ENCODE measurements at regions of chr6 and their contacts with region 1.

Region 1: DNA sequence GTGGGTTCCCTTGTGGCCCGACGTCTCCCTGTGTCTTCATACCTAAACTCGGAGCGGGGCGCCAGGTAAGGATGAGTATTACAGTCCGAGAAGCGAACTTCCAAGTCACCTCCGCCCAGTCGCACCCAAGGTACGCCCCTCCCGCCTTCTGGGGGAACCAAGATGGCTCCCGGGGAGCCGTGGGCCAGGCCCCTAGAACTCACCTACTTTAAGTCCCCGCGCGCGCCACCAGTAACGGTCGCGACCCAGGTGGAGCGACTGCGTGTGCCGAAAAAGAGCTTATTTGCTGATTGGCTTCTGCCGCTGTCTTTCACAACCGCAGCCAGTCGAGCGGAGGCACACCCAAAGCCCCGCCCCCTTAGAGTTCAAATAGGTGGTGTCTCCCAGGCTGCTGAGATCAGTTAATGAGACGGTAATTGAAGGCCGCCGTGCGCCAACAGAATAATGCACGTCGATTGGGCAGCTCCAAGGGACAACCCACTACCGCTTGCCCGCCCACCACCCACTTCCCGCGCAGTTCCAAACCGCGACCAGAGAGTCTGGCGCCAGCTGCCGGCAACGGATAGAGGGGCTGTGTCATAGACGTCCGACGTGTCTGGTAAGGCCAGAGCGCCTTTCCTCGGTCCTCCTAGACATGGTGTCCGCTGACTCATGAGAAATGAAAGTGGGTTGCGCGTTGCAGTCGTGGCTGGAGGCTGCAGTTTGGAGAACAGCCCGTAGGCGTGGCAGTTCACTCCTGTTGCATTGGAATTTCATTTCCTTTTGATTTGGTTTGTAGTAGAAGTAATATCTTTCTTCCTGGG is at the start of gene MDC1:
- DNase-seq: peak; percentile 100
- H3K4me3 Mint-ChIP-seq: peak within 1 kb of the TSS; percentile 92
- H3K27ac Mint-ChIP-seq: peak within 1 kb of the TSS; percentile 99
- H3K4me1 Mint-ChIP-seq: peaks cover 41% of the 10 kb centered on the region
- H3K27me3 Mint-ChIP-seq: no peaks in the 10 kb centered on the region
- total RNA-seq, gene MDC1: 79.5 to 88.7 TPM

Region 2: GRCh38 chr6:30489081-30490025 is 227.9 kb before region 1 on chr6 and contains the start of gene HLA-E:
- CTCF ChIA-PET with region 1: interaction called, 4 read pairs
- POLR2A ChIA-PET with region 1: no interaction called
- intact Hi-C with region 1: loop called (anchors 2 kb)
- DNase-seq: peak; percentile 93
- H3K4me3 Mint-ChIP-seq: peak within 1 kb of the TSS; percentile 99
- H3K27ac Mint-ChIP-seq: peak within 1 kb of the TSS; percentile 99
- H3K4me1 Mint-ChIP-seq: peaks cover 41% of the 10 kb centered on the region
- H3K27me3 Mint-ChIP-seq: peaks cover 2% of the 10 kb centered on the region
- total RNA-seq, gene HLA-E: 481 to 485 TPM

Region 3: DNA sequence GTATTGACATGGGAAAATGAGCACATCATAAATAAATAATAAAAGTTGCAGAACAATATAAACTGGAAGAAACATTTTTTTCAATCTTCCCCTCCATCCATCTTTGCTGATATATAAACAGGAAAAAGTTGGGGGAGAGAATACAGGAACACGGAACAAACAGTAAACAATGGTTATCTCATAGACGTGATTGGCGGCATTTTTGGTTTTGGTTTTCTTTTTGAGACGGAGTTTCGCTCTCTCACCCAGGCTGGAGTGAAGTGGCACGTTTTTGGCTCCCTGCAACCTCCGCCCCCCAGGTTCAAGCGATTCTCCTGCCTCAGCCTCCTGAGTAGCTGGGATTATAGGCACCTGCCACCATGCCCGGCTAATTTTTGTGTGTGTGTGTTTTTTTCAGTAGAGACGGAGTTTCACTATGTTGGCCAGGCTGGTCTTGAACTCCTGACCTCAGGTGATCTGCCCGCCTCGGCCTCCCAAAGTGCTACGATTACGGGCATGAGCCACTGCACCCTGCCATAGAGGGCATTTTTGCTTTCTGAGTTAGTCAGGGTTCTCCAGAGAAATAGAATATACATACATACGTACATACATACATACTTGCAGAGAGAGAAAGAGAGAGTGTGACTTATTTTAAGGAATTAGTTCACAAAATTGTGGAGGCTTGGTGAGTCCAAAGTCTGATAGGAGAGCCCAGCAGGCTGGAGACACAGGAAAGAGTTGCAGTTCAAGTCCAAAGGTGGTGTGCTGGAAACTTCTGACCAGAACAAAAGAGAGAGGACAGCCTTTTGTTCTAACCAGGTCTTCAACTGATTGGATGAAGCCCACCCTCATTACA is 183.6 kb before region 1 on chr6:
- CTCF ChIA-PET with region 1: no interaction called
- POLR2A ChIA-PET with region 1: no interaction called
- intact Hi-C with region 1: no loop called
- DNase-seq: peak; percentile 48
- H3K4me3 Mint-ChIP-seq: peak overlapping the region; percentile 78
- H3K27ac Mint-ChIP-seq: peak overlapping the region; percentile 91
- H3K4me1 Mint-ChIP-seq: peaks cover 52% of the 10 kb centered on the region
- H3K27me3 Mint-ChIP-seq: no peaks in the 10 kb centered on the region

Region 4: DNA sequence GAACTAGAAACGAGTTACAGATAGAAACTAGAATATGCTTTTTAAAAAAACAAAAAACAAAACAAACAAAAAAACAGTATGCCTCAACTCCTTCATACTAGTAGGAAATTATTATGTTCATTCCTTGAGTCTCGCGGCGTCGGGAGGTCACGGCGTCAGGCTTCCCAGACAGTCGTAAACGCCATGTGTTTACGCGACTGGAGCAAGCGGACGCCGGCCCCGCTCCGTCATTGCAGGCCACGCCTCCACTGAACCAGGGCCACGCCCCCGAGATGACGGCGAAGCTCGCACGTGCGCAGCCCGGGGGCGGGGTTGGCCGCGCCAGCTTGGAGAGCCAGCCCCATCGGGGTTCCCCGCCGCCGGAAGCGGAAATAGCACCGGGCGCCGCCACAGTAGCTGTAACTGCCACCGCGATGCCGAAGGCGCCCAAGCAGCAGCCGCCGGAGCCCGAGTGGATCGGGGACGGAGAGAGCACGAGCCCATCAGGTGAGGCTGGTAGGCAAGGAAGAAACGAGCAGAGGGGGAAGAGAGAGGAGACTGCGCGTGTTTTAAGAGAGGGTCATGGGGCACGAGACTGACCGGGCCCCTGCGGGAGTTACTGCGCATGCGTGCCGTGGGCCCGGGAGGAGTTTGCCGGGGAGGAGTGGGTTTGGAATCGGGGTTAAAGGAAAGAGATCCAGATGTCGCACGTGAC is 146.0 kb before region 1 on chr6 and contains the start of gene ABCF1:
- CTCF ChIA-PET with region 1: no interaction called
- POLR2A ChIA-PET with region 1: interaction called, 3 read pairs
- intact Hi-C with region 1: loop called (anchors 2 kb)
- DNase-seq: peak; percentile 99
- H3K4me3 Mint-ChIP-seq: peak within 1 kb of the TSS; percentile 94
- H3K27ac Mint-ChIP-seq: peak within 1 kb of the TSS; percentile 94
- H3K4me1 Mint-ChIP-seq: peaks cover 60% of the 10 kb centered on the region
- H3K27me3 Mint-ChIP-seq: no peaks in the 10 kb centered on the region
- total RNA-seq, gene ABCF1: 87.0 to 87.1 TPM

Region 5: DNA sequence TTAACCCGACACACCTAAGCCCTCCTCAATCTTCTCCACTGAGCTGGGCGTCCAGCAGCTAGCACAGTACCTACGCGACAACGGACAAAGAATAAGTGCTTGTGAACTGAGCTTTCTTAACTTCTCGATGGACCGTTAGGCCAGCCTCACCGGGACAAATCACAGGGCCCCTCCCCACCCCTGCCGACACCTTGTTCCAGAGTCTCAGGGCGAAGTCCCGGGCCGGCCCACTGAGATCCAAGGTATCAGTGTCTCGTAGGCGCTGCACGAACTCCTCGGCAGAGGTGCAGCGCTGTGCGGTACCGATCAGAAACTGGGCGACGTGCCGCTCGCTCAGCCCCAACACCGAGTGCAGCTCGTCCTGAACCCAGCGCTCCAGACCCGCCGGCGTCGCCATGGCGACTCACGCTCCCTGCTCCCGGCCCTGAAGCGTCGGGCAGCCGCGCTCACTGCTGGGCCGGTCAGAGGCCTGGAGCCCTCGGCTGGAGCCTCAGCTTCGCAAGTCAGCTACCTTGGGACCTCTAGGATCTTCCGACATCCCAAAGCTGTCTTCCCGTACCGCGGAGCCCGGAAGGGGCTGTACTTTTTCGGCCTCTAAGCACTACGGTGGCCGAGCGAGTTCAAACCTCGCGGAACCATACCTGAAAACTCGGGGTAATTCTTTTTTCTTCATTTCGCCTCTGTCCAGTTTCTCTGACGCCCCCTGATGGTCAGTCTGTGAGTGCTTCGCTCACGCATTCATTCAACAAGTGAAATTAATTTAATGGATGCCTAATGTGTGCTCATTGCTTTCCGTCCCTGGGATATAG is 44.6 kb before region 1 on chr6 and contains the start of gene DHX16:
- CTCF ChIA-PET with region 1: interaction called, 628 read pairs
- POLR2A ChIA-PET with region 1: interaction called, 5 read pairs
- intact Hi-C with region 1: no loop called
- DNase-seq: peak; percentile 93
- H3K4me3 Mint-ChIP-seq: peak within 1 kb of the TSS; percentile 91
- H3K27ac Mint-ChIP-seq: peak within 1 kb of the TSS; percentile 84
- H3K4me1 Mint-ChIP-seq: peaks cover 30% of the 10 kb centered on the region
- H3K27me3 Mint-ChIP-seq: no peaks in the 10 kb centered on the region
- total RNA-seq, gene DHX16: 33.1 to 35.3 TPM

Region 6: DNA sequence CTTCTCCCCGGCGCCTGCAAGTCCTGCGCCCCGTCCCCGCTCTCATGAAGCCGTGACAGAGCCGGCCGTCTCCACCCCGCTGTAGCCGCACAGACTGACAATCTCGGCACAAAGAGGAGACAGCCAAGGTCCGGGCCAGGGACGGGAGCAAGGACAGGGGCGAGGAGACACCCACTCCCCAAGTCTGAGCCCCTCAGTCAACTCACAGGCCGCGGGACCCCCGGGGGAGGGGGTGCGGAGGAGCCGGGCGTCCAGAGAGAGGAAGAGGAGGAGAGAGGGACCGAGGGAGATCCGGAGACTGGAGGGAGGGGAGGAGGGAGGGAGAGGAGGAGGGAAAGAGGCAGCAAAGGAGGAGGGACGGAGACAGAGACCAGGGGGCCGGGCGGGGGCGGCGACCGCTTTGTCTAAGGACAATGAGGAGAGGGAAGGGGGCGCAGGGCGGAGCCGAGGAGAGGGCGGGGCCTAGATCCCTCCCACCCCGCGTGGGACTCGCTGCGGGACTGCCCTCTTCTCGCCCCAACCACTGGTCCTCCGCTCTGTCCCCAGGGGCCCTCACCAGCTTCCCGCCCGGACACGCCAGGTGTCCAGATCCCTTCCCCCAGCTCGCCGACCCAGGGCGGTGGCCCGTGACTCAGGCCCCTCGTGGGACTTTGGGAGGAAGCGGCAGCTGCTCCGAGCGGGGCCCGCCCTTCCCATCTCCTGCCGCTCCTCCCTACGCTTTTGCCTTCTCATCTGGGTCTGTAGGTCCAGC is 30.2 kb before region 1 on chr6:
- CTCF ChIA-PET with region 1: interaction called, 628 read pairs
- POLR2A ChIA-PET with region 1: interaction called, 209 read pairs
- intact Hi-C with region 1: loop called (anchors 1 kb)
- DNase-seq: peak; percentile 90
- H3K4me3 Mint-ChIP-seq: peak overlapping the region; percentile 100
- H3K27ac Mint-ChIP-seq: peak overlapping the region; percentile 99
- H3K4me1 Mint-ChIP-seq: peaks cover 38% of the 10 kb centered on the region
- H3K27me3 Mint-ChIP-seq: no peaks in the 10 kb centered on the region

Region 7: DNA sequence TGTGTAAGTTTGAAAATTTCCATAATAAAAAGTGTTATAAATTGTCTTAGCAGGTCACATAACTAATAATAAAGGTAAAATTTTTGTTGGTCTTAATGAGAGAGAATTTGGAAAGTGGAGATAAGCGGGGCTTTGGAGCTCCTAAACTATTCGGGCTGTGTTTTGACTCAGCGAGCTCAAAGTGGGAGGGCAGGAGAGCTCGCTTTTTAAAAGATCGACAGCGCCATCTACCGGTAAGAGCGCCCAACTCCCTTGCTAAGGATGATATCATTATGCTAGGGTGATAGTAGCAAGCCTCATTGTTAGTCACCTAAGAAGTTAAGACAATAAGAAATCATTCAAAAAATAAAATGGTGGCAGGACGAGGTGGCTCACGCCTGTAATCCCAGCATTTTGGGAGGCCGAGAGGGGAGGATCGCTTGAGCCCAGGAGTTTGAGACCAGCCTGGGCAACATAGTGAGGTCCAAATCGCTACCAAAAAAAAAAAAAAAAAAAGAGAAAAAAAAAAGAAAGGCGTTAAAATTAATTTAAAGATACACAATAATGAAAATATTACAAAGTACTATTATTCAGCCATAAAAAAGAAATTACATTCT is 370.3 kb after region 1 on chr6:
- CTCF ChIA-PET with region 1: interaction called, 3 read pairs
- POLR2A ChIA-PET with region 1: no interaction called
- intact Hi-C with region 1: loop called (anchors 10 kb)
- DNase-seq: peak; percentile 92
- H3K4me3 Mint-ChIP-seq: peak overlapping the region; percentile 12
- H3K27ac Mint-ChIP-seq: peak overlapping the region; percentile 45
- H3K4me1 Mint-ChIP-seq: peaks cover 11% of the 10 kb centered on the region
- H3K27me3 Mint-ChIP-seq: no peaks in the 10 kb centered on the region

Measured in activated CD4-positive, alpha-beta memory T cell treated with anti-CD3 and anti-CD28 coated beads for 36 hours (primary cell).